Caco-2 (cell line): ENCODE measurements at regions of chr6 and their contacts with region 1.

Region 1: DNA sequence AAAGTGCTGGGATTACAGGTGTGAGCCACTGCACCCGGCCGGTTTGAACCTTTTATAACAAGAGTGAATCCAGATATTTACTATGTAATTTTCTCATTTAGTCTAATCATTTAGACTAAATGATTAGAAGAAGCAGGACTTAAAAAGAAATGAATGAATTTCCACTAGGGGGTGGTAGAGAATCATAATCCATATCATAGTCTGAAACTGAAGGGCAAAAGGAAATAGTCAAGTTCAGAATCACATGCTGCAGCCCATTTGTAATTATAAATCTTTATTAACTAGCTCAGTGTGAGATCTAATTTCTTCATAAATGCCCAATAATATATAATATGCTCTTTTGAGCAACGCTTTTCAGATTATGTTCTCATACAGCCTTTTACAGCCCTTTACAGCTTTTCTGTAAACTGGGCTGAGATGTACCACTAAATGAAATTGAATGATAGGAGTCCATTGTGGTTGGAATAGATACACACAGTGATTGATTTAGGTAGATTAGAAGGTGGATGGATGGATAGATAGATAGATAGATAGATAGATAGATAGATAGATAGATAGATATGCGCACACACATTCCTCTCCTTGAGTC is 31.8 kb downstream of the PSMB9 start:
- DNase-seq: peak in 1 of 2 experiments; percentile 42
- H3K4me3 ChIP-seq: no peak overlapping the region
- H3K4me3 Mint-ChIP-seq: no peak overlapping the region
- H3K27ac Mint-ChIP-seq: no peak overlapping the region
- H3K4me1 ChIP-seq: no peaks in the 10 kb centered on the region
- H3K4me1 Mint-ChIP-seq: no peaks in the 10 kb centered on the region
- H3K27me3 ChIP-seq: no peaks in the 10 kb centered on the region
- H3K27me3 Mint-ChIP-seq: peaks cover 7% of the 10 kb centered on the region
- CTCF ChIP-seq: peak; percentile 50 to 57

Region 2: DNA sequence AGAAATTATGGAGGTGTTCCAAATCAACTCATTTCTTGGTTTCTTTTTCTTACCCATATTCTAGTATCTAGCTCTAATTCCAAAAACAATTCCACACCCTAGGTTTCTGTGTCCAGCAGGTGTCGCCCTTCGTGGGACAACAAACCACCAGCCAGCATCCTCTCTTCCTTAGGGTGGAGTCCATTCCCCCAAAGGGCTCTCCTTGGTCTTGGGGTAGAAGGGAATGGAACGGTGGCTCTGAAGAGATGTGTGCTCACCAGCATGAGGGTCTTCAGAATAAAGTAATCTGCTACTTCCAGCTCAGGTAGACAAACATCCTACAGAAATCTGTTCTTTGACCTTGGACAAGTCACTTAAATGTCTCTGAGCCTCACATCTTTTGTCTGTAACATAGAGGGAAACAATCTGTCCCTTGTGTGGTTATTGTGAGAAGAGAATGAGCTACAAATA is 47.9 kb after region 1 on chr6:
- CTCF ChIA-PET with region 1: interaction called, 6 read pairs
- POLR2A ChIA-PET with region 1: no interaction called
- intact Hi-C with region 1: loop called (anchors 1 kb)
- DNase-seq: peak; percentile 66 to 76
- H3K4me3 ChIP-seq: no peak overlapping the region
- H3K4me3 Mint-ChIP-seq: no peak overlapping the region
- H3K27ac Mint-ChIP-seq: no peak overlapping the region
- H3K4me1 ChIP-seq: no peaks in the 10 kb centered on the region
- H3K4me1 Mint-ChIP-seq: no peaks in the 10 kb centered on the region
- H3K27me3 ChIP-seq: no peaks in the 10 kb centered on the region
- H3K27me3 Mint-ChIP-seq: peaks cover 22% of the 10 kb centered on the region
- CTCF ChIP-seq: peak; percentile 63 to 77